ENCODE measurements at regions of chr17 and their contacts with region 1.

Region 1: DNA sequence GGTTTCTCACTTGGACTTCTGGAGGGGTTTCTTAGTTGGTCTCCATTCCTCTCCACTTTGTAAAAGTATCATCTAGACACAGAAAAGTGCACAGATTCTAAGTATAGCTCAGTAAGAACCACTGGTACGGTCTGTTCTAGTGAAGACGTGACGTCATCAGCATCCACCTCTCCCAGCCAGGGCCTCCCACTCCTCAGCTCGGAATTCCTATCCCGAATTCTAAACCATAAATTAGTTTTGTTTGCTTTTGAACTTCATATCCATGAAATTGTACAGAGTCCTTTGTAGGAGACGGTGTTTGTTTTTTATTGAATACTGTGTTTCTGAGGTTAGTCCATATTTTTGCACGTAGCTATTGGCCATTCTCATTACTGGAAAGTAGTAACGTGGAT is 25.5 kb downstream of the FOXK2 start:
- DNase-seq: no peak
- ATAC-seq: no peak
- H3K4me3 ChIP-seq: no peak overlapping the region
- H3K27ac ChIP-seq: no peak overlapping the region
- H3K4me1 ChIP-seq: peaks cover 54% of the 10 kb centered on the region
- H3K27me3 ChIP-seq: no peaks in the 10 kb centered on the region
- CTCF ChIP-seq: no peak
- EP300 ChIP-seq: no peak
- POLR2A ChIP-seq: no peak
- RAD21 ChIP-seq: no peak

Region 2: DNA sequence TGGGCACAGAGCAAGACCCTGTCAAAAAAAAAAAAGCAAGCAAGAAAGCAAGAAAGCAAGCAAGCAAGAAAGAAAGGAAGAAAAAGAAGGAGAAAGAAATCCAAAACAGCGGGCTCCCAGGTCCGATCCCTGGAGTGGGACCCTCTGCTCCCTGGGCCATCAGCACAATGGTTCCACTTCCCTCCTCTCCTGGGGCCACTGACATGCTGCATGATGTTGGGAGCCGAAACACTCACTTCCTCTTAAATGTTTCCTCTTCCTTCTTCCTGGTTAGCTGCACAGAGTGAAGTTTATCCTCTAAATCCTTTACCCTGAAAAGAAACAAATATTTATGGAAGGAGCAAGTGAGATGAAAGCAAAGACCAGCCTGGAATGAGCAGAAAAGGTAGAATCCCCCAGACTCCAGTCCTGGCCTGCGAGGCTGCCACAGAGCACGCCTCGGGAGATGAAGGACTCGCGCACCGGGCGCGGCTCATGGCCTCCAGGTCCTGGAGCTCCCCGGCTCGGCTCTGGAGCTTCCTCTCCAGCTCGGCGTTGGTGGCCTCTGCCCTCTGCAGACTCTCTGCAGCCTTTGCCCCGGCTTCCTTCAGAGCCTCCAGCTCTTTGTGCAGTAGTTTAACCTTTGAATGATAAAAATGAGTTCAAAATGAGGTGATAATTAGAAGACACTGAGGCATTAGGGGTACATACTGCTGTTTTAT is 351.4 kb before region 1 on chr17:
- CTCF ChIA-PET with region 1: no interaction called
- POLR2A ChIA-PET with region 1: no interaction called
- in situ Hi-C with region 1: no loop called
- intact Hi-C with region 1: no loop called
- DNase-seq: no peak
- ATAC-seq: no peak
- H3K4me3 ChIP-seq: no peak overlapping the region
- H3K27ac ChIP-seq: no peak overlapping the region
- H3K4me1 ChIP-seq: peaks cover 4% of the 10 kb centered on the region
- H3K27me3 ChIP-seq: no peaks in the 10 kb centered on the region
- CTCF ChIP-seq: no peak
- EP300 ChIP-seq: no peak
- POLR2A ChIP-seq: no peak
- RAD21 ChIP-seq: no peak

Region 3: DNA sequence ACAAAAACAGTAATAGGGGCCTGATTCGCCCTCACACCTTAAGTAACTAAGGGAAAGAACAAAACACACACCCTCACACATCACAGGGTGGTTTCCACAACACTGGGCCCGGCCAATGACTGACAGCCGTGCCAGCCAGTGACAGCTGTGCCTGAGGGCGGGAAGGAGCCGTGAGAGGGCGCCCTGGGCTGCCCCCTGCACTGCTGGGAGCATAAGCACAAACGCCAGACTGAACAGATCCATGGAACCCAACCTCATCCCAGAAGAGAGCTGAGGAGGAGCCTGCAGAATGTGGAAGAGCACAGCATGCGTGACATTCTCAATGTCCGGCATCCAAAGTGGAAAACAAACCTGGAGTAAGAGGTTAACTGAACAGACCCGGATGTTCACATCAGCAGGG is 287.6 kb before region 1 on chr17:
- CTCF ChIA-PET with region 1: no interaction called
- POLR2A ChIA-PET with region 1: no interaction called
- in situ Hi-C with region 1: no loop called
- intact Hi-C with region 1: no loop called
- DNase-seq: no peak
- ATAC-seq: peak; percentile 84
- H3K4me3 ChIP-seq: no peak overlapping the region
- H3K27ac ChIP-seq: no peak overlapping the region
- H3K4me1 ChIP-seq: no peaks in the 10 kb centered on the region
- H3K27me3 ChIP-seq: no peaks in the 10 kb centered on the region
- CTCF ChIP-seq: peak; percentile 53
- EP300 ChIP-seq: no peak
- POLR2A ChIP-seq: no peak
- RAD21 ChIP-seq: no peak

Region 4: DNA sequence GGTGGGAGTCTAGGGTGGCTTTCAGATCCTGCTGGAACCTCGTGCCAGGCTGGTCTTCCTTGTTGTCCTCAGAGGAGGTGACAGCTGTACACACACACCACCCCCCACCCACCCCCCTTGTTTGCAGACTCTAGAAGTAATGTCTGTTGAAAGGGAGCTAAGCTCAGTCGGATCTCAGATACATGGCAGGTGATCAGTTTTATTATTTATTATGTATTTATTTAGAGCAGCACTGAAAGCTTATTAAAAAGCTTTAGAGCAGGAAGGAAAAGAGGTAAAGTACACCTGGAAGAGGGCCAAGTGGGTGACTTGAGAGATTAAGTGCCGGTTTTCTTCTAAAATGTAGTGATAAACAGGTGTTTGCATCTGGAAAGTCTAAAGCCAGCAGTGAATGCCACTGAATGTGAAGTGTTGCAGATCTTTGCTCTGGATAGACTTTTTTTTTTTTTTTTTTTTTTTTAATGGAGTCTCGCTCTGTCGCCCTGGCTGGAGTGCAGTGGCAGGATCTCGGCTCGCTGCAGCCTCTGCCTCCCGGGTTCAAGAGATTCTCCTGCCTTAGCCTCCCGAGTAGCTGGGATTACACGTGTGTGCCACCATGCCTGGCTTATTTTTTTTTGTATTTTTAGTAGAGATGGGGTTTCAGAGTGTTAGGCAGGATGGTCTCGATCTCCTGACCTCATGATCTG is 14.6 kb after region 1 on chr17:
- CTCF ChIA-PET with region 1: no interaction called
- POLR2A ChIA-PET with region 1: no interaction called
- in situ Hi-C with region 1: no loop called
- intact Hi-C with region 1: loop called (anchors 1 kb)
- DNase-seq: peak; percentile 25
- ATAC-seq: 0 out of 3 replicates have a peak, but pooled peaks have one; percentile 3
- H3K4me3 ChIP-seq: no peak overlapping the region
- H3K27ac ChIP-seq: peak overlapping the region; percentile 15
- H3K4me1 ChIP-seq: peaks cover 79% of the 10 kb centered on the region
- H3K27me3 ChIP-seq: no peaks in the 10 kb centered on the region
- CTCF ChIP-seq: no peak
- EP300 ChIP-seq: no peak
- POLR2A ChIP-seq: no peak
- RAD21 ChIP-seq: no peak

Region 5: GRCh38 chr17:82611140-82612058 is 66.3 kb after region 1 on chr17:
- CTCF ChIA-PET with region 1: no interaction called
- POLR2A ChIA-PET with region 1: no interaction called
- in situ Hi-C with region 1: no loop called
- intact Hi-C with region 1: no loop called
- DNase-seq: no peak
- ATAC-seq: no peak
- H3K4me3 ChIP-seq: no peak overlapping the region
- H3K27ac ChIP-seq: no peak overlapping the region
- H3K4me1 ChIP-seq: peaks cover 2% of the 10 kb centered on the region
- H3K27me3 ChIP-seq: no peaks in the 10 kb centered on the region
- CTCF ChIP-seq: no peak
- EP300 ChIP-seq: no peak
- POLR2A ChIP-seq: no peak
- RAD21 ChIP-seq: no peak

Measured in HepG2 (cell line).